ENCODE measurements at regions of chr5 and their contacts with region 1.

Region 1: GRCh38 chr5:59246145-59246869 is 647.2 kb downstream of the PDE4D start:
- DNase-seq: no peak
- ATAC-seq: no peak
- H3K4me3 ChIP-seq: no peak overlapping the region
- H3K4me3 Mint-ChIP-seq: no peak overlapping the region
- H3K27ac ChIP-seq: no peak overlapping the region
- H3K27ac Mint-ChIP-seq: no peak overlapping the region
- H3K4me1 ChIP-seq: no peaks in the 10 kb centered on the region
- H3K4me1 Mint-ChIP-seq: no peaks in the 10 kb centered on the region
- H3K27me3 ChIP-seq: no peaks in the 10 kb centered on the region
- H3K27me3 Mint-ChIP-seq: peaks cover 6 to 10% of the 10 kb centered on the region in 2 donors

Region 2: GRCh38 chr5:59275510-59276324 is 29.4 kb after region 1 on chr5:
- CTCF ChIA-PET with region 1: no interaction called
- POLR2A ChIA-PET with region 1: interaction called in 1 of 2 experiments, 11 read pairs
- DNase-seq: no peak
- ATAC-seq: no peak
- H3K4me3 ChIP-seq: peak overlapping the region in 1 of 2 donors; percentile 66
- H3K4me3 Mint-ChIP-seq: peak overlapping the region; percentile 52 to 55 (median 52)
- H3K27ac ChIP-seq: no peak overlapping the region
- H3K27ac Mint-ChIP-seq: no peak overlapping the region
- H3K4me1 ChIP-seq: peaks cover 0 to 2% of the 10 kb centered on the region in 2 experiments
- H3K4me1 Mint-ChIP-seq: peaks cover 10 to 13% (median 12%) of the 10 kb centered on the region in 3 donors
- H3K27me3 ChIP-seq: peaks cover 0 to 2% of the 10 kb centered on the region in 2 experiments
- H3K27me3 Mint-ChIP-seq: peaks cover 18 to 27% of the 10 kb centered on the region in 2 donors

Region 3: DNA sequence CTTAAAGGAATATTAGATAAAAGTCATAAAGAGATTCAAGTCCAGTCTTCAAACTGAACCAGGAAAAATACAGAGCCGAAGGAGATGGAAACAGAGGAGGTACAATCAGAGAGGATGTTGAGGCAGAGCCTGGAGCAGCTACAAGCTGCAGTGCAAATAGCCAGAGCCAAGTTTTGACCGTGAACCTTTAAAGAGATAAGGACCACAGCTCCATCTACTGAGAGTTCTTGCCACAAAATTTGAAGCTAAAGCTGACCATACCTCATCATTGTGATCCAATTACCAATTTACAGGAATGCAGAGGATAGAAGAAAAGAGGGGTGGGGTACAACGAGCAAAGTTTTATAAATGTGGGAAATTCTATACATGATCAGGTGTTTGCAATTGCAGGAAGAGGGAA is 1464.1 kb after region 1 on chr5:
- CTCF ChIA-PET with region 1: no interaction called
- POLR2A ChIA-PET with region 1: no interaction called
- DNase-seq: no peak
- ATAC-seq: no peak
- H3K4me3 ChIP-seq: no peak overlapping the region
- H3K4me3 Mint-ChIP-seq: no peak overlapping the region
- H3K27ac ChIP-seq: no peak overlapping the region
- H3K27ac Mint-ChIP-seq: no peak overlapping the region
- H3K4me1 ChIP-seq: no peaks in the 10 kb centered on the region
- H3K4me1 Mint-ChIP-seq: no peaks in the 10 kb centered on the region
- H3K27me3 ChIP-seq: peaks cover 0 to 4% of the 10 kb centered on the region in 2 experiments
- H3K27me3 Mint-ChIP-seq: peaks cover 9 to 23% of the 10 kb centered on the region in 2 donors

Measured in T-cell (primary cell).